Right cardiac atrium (tissue), 5 donors: ENCODE measurements at regions of chr19 and their contacts with region 1.

Region 1: GRCh38 chr19:3434712-3435553 is 45.4 kb downstream of the SMIM24 start:
- DNase-seq: peak; percentile 98 to 99 (median 99)
- ATAC-seq: peak; percentile 96
- H3K4me3 ChIP-seq: peak overlapping the region; percentile 23
- H3K27ac ChIP-seq: peak overlapping the region; percentile 93
- H3K4me1 ChIP-seq: no peaks in the 10 kb centered on the region
- H3K27me3 ChIP-seq: no peaks in the 10 kb centered on the region

Region 2: GRCh38 chr19:3324321-3324856 is 110.5 kb before region 1 on chr19:
- intact Hi-C with region 1: loop called in 1 of 4 experiments (anchors 5 kb)
- DNase-seq: peak; percentile 61 to 81 (median 81)
- ATAC-seq: peak; percentile 31 to 53
- H3K4me3 ChIP-seq: no peak overlapping the region
- H3K27ac ChIP-seq: no peak overlapping the region
- H3K4me1 ChIP-seq: no peaks in the 10 kb centered on the region
- H3K27me3 ChIP-seq: no peaks in the 10 kb centered on the region

Region 3: DNA sequence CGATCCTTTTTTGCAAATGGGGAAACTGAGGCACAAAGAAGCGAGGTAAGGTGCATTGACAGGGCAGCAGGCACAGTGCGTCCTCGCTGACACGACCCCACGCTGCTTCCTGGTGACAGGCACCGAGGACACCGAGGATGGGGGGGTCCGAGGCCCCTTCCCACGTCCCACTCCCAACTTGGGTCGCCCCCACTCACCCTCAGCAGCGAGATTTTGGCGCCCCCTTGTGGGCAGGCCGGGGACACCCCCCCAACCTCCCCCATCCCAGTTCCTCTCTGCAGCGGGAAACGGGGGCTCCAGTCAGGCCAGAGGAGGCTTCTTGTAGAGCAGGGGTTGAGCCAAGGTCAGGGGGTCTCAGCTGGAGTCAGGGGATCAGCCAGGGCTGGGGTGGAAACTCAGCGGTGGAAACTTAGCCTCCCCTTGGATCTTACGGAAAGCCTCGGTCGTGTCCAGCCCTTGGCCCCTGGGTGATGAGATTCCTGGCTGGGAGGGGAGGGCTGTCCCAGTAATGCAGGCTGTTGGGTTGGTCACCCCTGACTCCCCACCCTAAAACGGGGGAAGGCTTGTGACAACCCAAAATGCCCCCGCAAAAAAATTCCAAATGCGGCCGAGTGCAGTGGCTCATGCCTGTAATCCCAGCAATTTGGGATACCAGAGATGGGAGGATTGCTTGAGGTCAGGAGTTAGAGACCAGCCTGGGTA is 37.2 kb after region 1 on chr19:
- intact Hi-C with region 1: loop called in 1 of 4 experiments (anchors 5 kb)
- DNase-seq: peak; percentile 51 to 81 (median 74)
- ATAC-seq: peak; percentile 45 to 61
- H3K4me3 ChIP-seq: no peak overlapping the region
- H3K27ac ChIP-seq: no peak overlapping the region
- H3K4me1 ChIP-seq: no peaks in the 10 kb centered on the region
- H3K27me3 ChIP-seq: no peaks in the 10 kb centered on the region